ENCODE measurements at regions of chr1 and their contacts with region 1.

Region 1: GRCh38 chr1:221715321-221716169 is 26.3 kb downstream of the DUSP10 start:
- DNase-seq: no peak
- H3K4me3 ChIP-seq: no peak overlapping the region
- H3K27ac ChIP-seq: peak overlapping the region; percentile 73 to 89 (median 84)
- H3K4me1 ChIP-seq: peaks cover 0 to 98% (median 91%) of the 10 kb centered on the region in 4 donors
- H3K27me3 ChIP-seq: no peaks in the 10 kb centered on the region
- CTCF ChIP-seq: no peak
- EP300 ChIP-seq: peak in 2 of 4 donors; percentile 34 to 51
- POLR2A ChIP-seq: no peak

Region 2: DNA sequence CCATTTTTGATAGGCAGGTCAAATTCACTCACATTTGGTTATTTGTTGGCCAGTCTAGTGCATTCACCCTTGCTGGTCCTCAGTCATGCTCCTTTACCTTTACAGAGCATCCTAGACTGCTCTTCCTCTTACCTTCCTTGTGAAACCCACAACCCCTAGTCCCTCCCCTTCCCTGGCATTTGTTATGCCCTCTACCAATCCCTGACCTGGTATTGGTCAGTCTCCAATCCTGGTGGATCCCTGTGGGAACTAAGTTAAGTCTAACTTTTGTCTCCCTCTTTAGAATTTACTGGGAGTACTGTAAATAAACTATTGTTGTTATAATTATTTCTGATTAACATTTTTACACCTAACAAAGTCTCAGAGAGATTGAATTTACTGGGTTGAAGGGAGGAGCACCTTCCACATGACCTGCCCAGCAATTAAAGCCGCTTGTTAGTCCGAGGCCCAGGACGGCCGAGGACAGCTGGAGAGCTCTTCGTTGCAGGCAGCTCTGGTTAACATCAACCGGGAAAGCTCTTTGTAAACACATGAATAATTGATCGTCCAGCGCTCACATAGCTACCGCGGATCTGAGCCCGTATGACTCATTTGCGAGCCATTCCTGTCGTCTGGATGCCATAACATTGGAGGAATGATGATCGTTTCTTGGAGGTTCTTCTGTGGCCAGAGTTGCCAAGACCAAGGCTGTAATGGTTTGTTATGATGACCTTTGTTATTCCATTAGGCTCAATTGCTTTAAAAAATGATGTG is 896.9 kb before region 1 on chr1:
- intact Hi-C with region 1: loop called (anchors 5 kb)
- DNase-seq: peak; percentile 95
- H3K4me3 ChIP-seq: no peak overlapping the region
- H3K27ac ChIP-seq: peak overlapping the region; percentile 73 to 88 (median 84)
- H3K4me1 ChIP-seq: peaks cover 0 to 70% (median 69%) of the 10 kb centered on the region in 4 donors
- H3K27me3 ChIP-seq: no peaks in the 10 kb centered on the region
- CTCF ChIP-seq: no peak
- EP300 ChIP-seq: peak in 3 of 4 donors; percentile 90 to 95 (median 92)
- POLR2A ChIP-seq: no peak